ENCODE measurements at regions of chr16 and their contacts with region 1.

Region 1: GRCh38 chr16:75464130-75464918 is at the start of gene TMEM170A:
- DNase-seq: peak; percentile 97 to 99 (median 97)
- ATAC-seq: peak; percentile 98
- H3K4me3 ChIP-seq: peak within 1 kb of the TSS; percentile 78
- H3K27ac ChIP-seq: peak within 1 kb of the TSS; percentile 92
- H3K4me1 ChIP-seq: peaks cover 3 to 9% of the 10 kb centered on the region in 2 experiments; a peak in 4 of 5 replicates
- H3K27me3 ChIP-seq: no peaks in the 10 kb centered on the region
- CTCF ChIP-seq: peak; percentile 100
- EP300 ChIP-seq: peak; percentile 22; the same call in 1 of the 2 replicates
- POLR2A ChIP-seq: peak; percentile 97
- RAD21 ChIP-seq: peak; percentile 84 to 87
- polyA plus RNA-seq, gene TMEM170A: 6.1 to 7.3 TPM

Region 2: GRCh38 chr16:75074920-75075687 is 389.2 kb before region 1 on chr16:
- CTCF ChIA-PET with region 1: no interaction called
- POLR2A ChIA-PET with region 1: no interaction called
- in situ Hi-C with region 1: no loop called
- intact Hi-C with region 1: no loop called
- DNase-seq: peak; percentile 63 to 82 (median 76)
- ATAC-seq: peak; percentile 82
- H3K4me3 ChIP-seq: 0 out of 2 replicates have a peak overlapping the region, but pooled peaks have one; percentile 8
- H3K27ac ChIP-seq: peak overlapping the region; percentile 81
- H3K4me1 ChIP-seq: peaks cover 33 to 64% of the 10 kb centered on the region in 2 experiments
- H3K27me3 ChIP-seq: no peaks in the 10 kb centered on the region
- CTCF ChIP-seq: no peak
- EP300 ChIP-seq: peak; percentile 94
- POLR2A ChIP-seq: 0 out of 2 replicates have a peak, but pooled peaks have one; percentile 23
- RAD21 ChIP-seq: peak; percentile 36 to 52; a peak in 3 of 4 replicates

Region 3: GRCh38 chr16:75420987-75421819 is 43.1 kb before region 1 on chr16:
- CTCF ChIA-PET with region 1: interaction called, 4 read pairs
- POLR2A ChIA-PET with region 1: no interaction called
- in situ Hi-C with region 1: no loop called
- intact Hi-C with region 1: loop called (anchors 5 kb)
- DNase-seq: peak; percentile 26 to 85 (median 46)
- ATAC-seq: peak; percentile 97
- H3K4me3 ChIP-seq: 0 out of 2 replicates have a peak overlapping the region, but pooled peaks have one; percentile 3
- H3K27ac ChIP-seq: peak overlapping the region; percentile 29; the same call in 2 of the 3 replicates
- H3K4me1 ChIP-seq: peaks cover 4 to 8% of the 10 kb centered on the region in 2 experiments; a peak in 4 of 5 replicates
- H3K27me3 ChIP-seq: no peaks in the 10 kb centered on the region
- CTCF ChIP-seq: no peak
- EP300 ChIP-seq: no peak
- POLR2A ChIP-seq: 0 out of 2 replicates have a peak, but pooled peaks have one; percentile 37
- RAD21 ChIP-seq: no peak

Measured in K562 (cell line).